Activated CD4-positive, alpha-beta T cell treated with anti-CD3 and anti-CD28 coated beads, Interleukin-2, amount 10 ng/mL, durations not matched to agents 7 days and 5 days (primary cell): ENCODE measurements at regions of chr17 and their contacts with region 1.

Region 1: DNA sequence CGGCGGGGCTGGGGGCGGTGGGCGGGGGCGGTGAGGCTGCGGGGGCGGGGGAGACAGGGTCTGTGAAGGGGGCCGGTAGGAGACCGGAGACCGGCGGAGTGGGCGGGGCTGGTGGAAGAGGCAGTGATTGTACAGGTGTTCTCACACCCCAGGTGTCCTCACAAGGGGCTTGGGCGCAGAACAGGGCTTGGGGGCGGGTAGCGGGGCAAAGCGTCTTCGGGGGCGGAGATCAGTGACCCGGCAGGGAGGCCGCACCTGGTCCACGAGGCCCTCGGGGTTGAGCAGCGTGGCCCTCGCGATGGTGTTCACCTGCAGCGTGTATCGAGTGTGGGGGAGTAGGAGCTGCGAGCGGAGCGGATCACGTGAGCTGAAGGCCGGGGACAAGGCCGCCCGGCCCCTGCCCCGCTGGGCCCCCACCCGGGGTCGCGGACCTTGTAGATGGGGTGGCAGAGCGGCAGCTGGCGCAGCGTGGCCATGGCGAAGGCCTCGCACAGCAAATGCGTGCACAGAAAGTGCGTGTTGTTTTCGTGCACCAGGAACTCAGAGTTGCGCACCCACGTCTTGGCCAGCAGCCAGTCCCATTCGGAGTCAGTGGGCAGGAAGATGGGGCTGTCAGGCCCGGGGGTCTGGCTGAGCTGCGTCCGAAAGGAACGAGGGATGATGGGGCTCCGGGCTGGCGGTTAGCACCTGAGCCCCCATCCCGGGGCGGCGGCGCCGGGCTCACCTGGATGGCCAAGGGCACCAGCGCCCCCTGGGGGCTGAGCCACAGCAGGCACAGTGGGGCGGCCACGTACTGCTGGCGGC is 8.5 kb downstream of the ALOXE3 start:
- DNase-seq: peak; percentile 79
- H3K4me3 Mint-ChIP-seq: peak overlapping the region; percentile 17
- H3K27ac Mint-ChIP-seq: no peak overlapping the region
- H3K4me1 Mint-ChIP-seq: peaks cover 6% of the 10 kb centered on the region
- H3K27me3 Mint-ChIP-seq: peaks cover 37% of the 10 kb centered on the region

Region 2: DNA sequence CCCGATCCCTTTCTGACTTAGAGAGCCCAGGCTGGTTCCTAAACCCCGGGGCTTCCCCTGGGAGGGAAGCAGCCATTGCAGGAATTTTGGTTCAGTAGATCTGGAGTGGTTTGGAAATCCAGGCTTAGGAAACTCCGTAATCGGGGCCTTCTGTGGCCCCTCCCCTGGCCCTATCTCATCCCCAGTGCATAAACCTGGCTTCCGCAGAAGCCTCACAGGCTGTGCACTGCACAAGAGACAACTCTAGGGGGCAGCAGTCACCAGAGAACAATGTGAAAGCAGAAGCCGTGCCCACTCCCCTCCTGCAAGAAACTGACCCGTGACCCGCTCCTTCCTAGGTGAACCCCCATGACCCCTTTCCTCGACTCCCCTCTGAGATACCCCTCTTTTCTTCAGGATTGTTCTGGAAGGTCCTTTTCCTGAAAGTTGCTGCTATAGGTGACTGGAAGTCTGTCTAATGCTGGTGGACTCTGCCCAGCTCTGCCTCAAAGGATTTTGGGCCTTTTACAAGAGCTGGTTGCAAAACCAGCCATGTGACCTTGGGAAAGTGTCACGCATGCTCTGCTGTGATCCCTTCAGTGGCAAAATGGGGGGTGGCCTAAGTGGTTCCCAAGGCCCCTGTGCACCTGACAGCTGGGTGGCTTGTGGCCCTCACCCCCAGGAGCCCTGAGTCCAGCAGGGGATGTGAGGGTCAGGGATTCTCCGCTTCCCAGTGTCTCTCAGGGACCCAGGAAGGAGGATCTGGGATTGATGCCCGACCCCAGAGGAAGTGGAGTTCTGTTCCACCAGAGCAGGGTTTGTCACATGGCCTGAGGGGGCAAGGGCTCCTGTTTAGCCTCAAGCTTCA is 93.0 kb before region 1 on chr17:
- CTCF ChIA-PET with region 1: no interaction called
- POLR2A ChIA-PET with region 1: no interaction called
- DNase-seq: peak; percentile 68
- H3K4me3 Mint-ChIP-seq: peak overlapping the region; percentile 66
- H3K27ac Mint-ChIP-seq: no peak overlapping the region
- H3K4me1 Mint-ChIP-seq: peaks cover 11% of the 10 kb centered on the region
- H3K27me3 Mint-ChIP-seq: peaks cover 21% of the 10 kb centered on the region

Region 3: DNA sequence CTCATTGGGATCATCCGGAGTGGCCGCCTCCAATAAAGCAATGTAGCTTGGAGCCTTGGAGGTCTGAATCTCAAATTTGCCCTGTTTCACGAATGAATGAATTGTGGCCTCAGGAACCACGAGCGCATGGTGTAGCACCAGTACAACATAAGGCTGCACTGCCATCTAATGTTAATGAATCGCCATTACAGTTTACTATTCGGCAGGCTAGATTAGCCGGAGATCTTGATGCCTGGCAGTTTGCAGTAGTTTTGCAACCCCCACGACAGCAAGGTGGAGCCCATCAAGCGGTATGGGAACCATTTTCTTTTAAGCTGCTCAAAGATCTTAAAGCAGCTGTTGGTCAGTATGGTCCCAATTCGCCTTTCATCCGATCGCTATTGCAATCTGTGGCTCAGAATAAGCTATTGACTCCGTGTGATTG is 52.2 kb before region 1 on chr17:
- CTCF ChIA-PET with region 1: interaction called, 21 read pairs
- POLR2A ChIA-PET with region 1: no interaction called
- DNase-seq: peak; percentile 66
- H3K4me3 Mint-ChIP-seq: no peak overlapping the region
- H3K27ac Mint-ChIP-seq: no peak overlapping the region
- H3K4me1 Mint-ChIP-seq: peaks cover 25% of the 10 kb centered on the region
- H3K27me3 Mint-ChIP-seq: peaks cover 61% of the 10 kb centered on the region

Region 4: GRCh38 chr17:8073627-8074484 is 36.0 kb before region 1 on chr17:
- CTCF ChIA-PET with region 1: interaction called, 14 read pairs
- POLR2A ChIA-PET with region 1: no interaction called
- DNase-seq: peak; percentile 85
- H3K4me3 Mint-ChIP-seq: peak overlapping the region; percentile 60
- H3K27ac Mint-ChIP-seq: no peak overlapping the region
- H3K4me1 Mint-ChIP-seq: peaks cover 21% of the 10 kb centered on the region
- H3K27me3 Mint-ChIP-seq: peaks cover 57% of the 10 kb centered on the region

Region 5: GRCh38 chr17:8091033-8091687 is 18.7 kb before region 1 on chr17:
- CTCF ChIA-PET with region 1: interaction called, 15 read pairs
- POLR2A ChIA-PET with region 1: no interaction called
- DNase-seq: no peak
- H3K4me3 Mint-ChIP-seq: no peak overlapping the region
- H3K27ac Mint-ChIP-seq: no peak overlapping the region
- H3K4me1 Mint-ChIP-seq: peaks cover 14% of the 10 kb centered on the region
- H3K27me3 Mint-ChIP-seq: peaks cover 30% of the 10 kb centered on the region

Region 6: DNA sequence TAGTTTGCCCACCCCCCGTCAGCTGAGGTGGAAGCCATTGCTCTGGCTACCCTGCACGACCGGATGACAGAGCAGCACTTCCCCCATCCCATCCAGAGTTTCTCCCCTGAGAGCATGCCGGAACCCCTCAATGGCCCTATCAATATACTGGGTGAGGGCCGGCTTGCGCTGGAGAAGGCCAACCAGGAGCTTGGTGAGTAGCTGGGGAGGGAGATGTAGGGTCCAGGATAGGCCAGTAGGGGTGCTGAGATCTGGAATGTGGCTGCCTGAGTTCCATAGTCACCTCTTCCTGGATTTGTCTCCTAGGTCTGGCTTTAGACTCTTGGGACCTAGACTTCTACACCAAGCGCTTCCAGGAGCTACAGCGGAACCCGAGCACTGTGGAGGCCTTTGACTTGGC is 145.6 kb after region 1 on chr17:
- CTCF ChIA-PET with region 1: no interaction called
- POLR2A ChIA-PET with region 1: no interaction called
- DNase-seq: no peak
- H3K4me3 Mint-ChIP-seq: no peak overlapping the region
- H3K27ac Mint-ChIP-seq: no peak overlapping the region
- H3K4me1 Mint-ChIP-seq: peaks cover 3% of the 10 kb centered on the region
- H3K27me3 Mint-ChIP-seq: no peaks in the 10 kb centered on the region